AG04450 (cell line): ENCODE measurements at regions of chr20 and their contacts with region 1.

Region 1: DNA sequence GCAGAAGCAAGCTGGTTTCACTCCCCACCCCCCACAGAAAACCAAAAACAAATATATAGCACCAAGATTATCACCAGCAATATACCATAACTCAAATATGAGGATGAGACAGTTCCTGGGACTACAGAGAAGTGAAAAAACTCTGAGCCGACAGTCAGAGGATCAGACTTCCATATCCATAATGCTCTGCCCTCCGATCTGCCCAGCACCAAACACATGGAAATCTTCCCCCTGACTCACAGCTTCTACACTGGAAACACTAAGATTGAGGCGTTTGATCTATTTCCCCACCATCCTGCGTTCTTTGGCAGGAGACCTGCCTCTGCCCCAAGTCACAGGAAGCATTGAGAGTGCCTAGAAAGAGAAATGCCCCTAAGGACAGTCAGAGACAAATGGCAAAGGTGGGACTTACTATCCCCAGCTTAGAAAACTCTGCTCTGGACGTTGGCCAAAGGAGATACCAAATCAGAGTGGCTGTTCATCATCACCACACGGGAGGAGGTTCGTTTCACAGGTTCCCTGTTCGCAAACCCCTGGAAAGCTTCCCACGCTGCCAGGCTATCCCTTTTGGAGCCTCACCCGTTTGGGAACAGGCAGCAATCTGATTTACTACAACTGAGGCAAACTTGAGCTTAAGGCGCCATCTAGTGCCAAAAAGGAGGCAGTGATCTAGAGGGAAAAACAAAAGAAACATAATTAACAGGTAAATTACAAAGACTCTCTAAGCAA is 48.7 kb upstream of the SRSF6 start:
- DNase-seq: peak; percentile 8
- H3K4me3 ChIP-seq: no peak overlapping the region
- H3K27ac ChIP-seq: peak overlapping the region; percentile 2
- H3K27me3 ChIP-seq: no peaks in the 10 kb centered on the region
- CTCF ChIP-seq: peak; percentile 81

Region 2: DNA sequence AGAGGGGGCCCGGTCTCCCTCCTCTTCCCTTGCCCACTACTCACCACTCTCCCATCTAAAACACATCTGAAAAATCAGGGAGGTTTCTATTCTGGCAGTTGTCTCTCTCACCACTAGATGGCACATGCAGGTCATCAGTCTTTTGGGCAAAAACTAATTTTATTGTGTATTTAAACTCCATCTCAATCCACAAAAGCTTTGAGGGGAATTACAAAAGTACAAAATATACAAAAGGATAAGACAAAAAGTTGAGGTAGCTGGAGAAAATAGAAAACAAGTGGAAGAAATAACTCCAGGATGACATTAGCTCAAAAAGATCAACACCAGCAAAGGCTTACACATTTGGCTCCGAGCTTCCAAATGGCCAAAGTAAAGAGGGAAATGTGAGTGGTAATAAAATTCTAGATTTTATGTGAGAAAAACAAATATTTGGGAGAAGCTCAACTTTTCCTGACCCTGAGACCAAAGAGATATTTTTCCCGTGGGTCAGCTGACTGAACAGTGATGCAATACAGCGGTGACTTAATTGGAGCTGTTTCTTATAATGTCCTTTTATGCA is 1711.1 kb before region 1 on chr20:
- CTCF ChIA-PET with region 1: interaction called, 20 read pairs
- POLR2A ChIA-PET with region 1: no interaction called
- DNase-seq: no peak
- H3K4me3 ChIP-seq: no peak overlapping the region
- H3K27ac ChIP-seq: no peak overlapping the region
- H3K27me3 ChIP-seq: peaks cover 3% of the 10 kb centered on the region
- CTCF ChIP-seq: peak; percentile 91

Region 3: DNA sequence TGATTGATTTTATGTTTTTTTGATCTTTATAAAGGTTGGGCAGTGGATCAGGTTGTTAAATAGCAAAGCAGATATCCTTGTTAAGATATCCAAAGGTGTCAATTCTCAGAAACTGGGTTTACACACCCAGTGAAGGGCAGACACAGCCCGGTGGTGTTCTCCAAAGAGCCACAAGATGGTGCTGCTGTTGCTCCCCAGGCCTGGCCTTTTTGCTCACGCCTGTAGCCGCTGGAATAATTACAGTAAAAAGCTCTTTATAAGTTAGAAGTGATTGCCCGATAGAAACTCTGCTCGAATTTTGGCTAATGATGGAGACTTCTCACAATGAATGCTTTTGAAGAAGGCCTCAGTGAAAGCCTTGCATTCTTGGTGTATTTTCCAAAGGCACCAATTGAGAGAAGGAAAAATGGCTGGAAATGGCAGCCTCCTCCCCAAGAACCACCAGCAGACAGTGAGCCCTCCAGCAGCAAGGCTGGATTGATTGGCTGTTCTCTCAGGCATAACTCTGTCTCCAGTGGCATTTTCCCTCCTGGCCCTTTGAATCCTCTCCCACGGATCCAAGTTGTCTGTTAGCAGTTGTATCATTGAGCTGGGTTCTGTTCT is 1670.3 kb before region 1 on chr20:
- CTCF ChIA-PET with region 1: interaction called, 64 read pairs
- POLR2A ChIA-PET with region 1: no interaction called
- DNase-seq: no peak
- H3K4me3 ChIP-seq: no peak overlapping the region
- H3K27ac ChIP-seq: no peak overlapping the region
- H3K27me3 ChIP-seq: no peaks in the 10 kb centered on the region
- CTCF ChIP-seq: peak; percentile 92

Region 4: GRCh38 chr20:43220612-43221011 is 188.4 kb before region 1 on chr20:
- CTCF ChIA-PET with region 1: no interaction called
- POLR2A ChIA-PET with region 1: no interaction called
- DNase-seq: no peak
- H3K4me3 ChIP-seq: no peak overlapping the region
- H3K27ac ChIP-seq: no peak overlapping the region
- H3K27me3 ChIP-seq: no peaks in the 10 kb centered on the region
- CTCF ChIP-seq: no peak

Region 5: DNA sequence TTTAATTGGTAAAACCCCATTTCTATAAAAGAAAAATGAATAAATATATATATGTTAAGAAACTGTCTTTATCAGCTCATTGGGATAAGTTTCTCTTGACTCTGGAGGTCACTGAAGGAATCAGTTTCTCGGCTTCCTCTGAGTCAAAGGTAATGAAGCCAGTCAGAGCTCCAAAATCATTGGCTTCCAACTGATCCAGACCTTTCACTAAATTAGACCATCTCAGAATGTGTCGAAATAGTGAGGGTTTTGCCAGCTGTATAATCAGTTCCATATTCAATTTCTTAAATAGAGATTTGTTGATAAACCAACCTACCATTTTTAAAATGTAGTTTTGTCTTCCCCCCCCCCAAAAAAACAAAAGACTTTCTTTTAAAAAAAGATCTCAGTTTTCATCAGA is 11.9 kb before region 1 on chr20:
- CTCF ChIA-PET with region 1: interaction called, 14 read pairs
- POLR2A ChIA-PET with region 1: no interaction called
- DNase-seq: no peak
- H3K4me3 ChIP-seq: no peak overlapping the region
- H3K27ac ChIP-seq: no peak overlapping the region
- H3K27me3 ChIP-seq: peaks cover 4% of the 10 kb centered on the region
- CTCF ChIP-seq: no peak